OCI-LY7 (cell line): ENCODE measurements at regions of chr4 and their contacts with region 1.

Region 1: GRCh38 chr4:14596904-14597303 is 405.4 kb upstream of the CPEB2 start:
- DNase-seq: no peak
- H3K4me3 ChIP-seq: no peak overlapping the region
- H3K27ac ChIP-seq: no peak overlapping the region
- H3K4me1 ChIP-seq: no peaks in the 10 kb centered on the region
- CTCF ChIP-seq: no peak

Region 2: DNA sequence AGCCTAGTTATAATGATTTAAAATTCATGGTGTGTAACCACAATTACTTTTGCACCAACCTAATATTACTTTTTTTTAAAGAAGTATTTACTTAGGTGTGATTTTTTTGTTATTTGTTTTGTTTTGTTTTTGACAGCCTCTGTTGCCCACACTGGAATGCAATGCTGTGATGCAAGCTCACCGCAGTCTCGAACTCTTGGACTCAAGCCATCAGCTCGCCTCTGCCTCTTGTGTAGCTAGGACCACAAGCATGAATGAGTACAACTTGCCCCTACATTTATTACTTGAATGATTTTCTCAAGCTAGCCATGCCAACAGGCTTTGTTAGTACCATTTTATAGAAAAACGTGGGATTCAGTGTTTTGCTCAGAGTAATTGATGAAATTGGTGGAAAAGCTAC is 83.4 kb before region 1 on chr4:
- CTCF ChIA-PET with region 1: no interaction called
- POLR2A ChIA-PET with region 1: no interaction called
- intact Hi-C with region 1: no loop called
- DNase-seq: no peak
- H3K4me3 ChIP-seq: no peak overlapping the region
- H3K27ac ChIP-seq: no peak overlapping the region
- H3K4me1 ChIP-seq: no peaks in the 10 kb centered on the region
- CTCF ChIP-seq: no peak

Region 3: DNA sequence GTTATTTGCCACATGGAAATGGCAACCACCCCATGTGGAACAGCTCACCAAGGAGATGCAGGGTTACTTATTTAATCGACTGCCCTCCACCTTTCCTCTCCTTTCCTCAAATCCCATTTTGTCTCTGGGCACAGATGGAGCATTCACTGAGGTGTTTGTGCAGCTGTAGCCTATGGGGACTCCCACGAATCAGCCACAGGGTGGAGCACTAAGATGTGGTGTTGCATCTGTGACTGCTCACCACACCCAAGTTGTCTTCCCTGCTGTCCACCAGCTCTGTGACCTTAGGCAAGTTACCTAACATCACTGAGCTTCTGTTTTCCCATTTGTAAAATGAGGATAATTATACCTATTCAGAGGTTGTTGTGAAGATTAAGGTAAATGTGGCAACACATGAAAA is 153.0 kb after region 1 on chr4:
- CTCF ChIA-PET with region 1: no interaction called
- POLR2A ChIA-PET with region 1: no interaction called
- intact Hi-C with region 1: no loop called
- DNase-seq: no peak
- H3K4me3 ChIP-seq: no peak overlapping the region
- H3K27ac ChIP-seq: no peak overlapping the region
- H3K4me1 ChIP-seq: no peaks in the 10 kb centered on the region
- CTCF ChIP-seq: peak; percentile 33; the same call in 1 of the 2 replicates

Region 4: DNA sequence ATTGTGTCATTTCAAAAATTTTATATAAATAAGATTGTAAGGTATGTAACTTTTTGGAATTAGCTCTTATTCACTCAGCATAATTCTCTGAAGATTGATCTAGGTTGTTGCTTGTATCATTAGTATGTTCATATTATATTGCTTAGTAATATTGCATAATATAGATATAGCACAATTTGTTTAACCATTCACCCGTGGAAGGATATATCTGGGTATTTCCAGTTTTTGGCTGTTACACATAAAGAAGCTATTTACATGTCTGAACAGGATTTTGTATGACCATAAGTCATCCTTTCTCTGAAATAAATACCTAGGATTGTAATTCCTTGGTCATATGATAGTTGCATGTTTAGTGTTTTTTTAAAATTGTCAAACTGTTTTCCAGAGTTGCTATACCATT is 487.9 kb after region 1 on chr4:
- CTCF ChIA-PET with region 1: no interaction called
- POLR2A ChIA-PET with region 1: no interaction called
- intact Hi-C with region 1: loop called (anchors 5 kb)
- DNase-seq: no peak
- H3K4me3 ChIP-seq: no peak overlapping the region
- H3K27ac ChIP-seq: no peak overlapping the region
- H3K4me1 ChIP-seq: no peaks in the 10 kb centered on the region
- CTCF ChIP-seq: no peak